IMR-90 (cell line): ENCODE measurements at regions of chr6 and their contacts with region 1.

Region 1: GRCh38 chr6:70107852-70108629 is 194.8 kb downstream of the COL9A1 start:
- DNase-seq: peak; percentile 35
- ATAC-seq: peak; percentile 72
- H3K4me3 ChIP-seq: no peak overlapping the region
- H3K27ac ChIP-seq: no peak overlapping the region
- H3K4me1 ChIP-seq: no peaks in the 10 kb centered on the region
- H3K27me3 ChIP-seq: no peaks in the 10 kb centered on the region
- CTCF ChIP-seq: peak; percentile 75
- POLR2A ChIP-seq: no peak
- RAD21 ChIP-seq: peak; percentile 74

Region 2: GRCh38 chr6:68634726-68635411 is 1473.2 kb before region 1 on chr6 and contains the start of gene ADGRB3:
- CTCF ChIA-PET with region 1: no interaction called
- POLR2A ChIA-PET with region 1: no interaction called
- dilution Hi-C with region 1: no loop called
- in situ Hi-C with region 1: no loop called
- intact Hi-C with region 1: loop called (anchors 1 kb)
- DNase-seq: peak; percentile 47
- ATAC-seq: peak; percentile 88
- H3K4me3 ChIP-seq: peak within 1 kb of the TSS; percentile 72
- H3K27ac ChIP-seq: no peak within 1 kb of the TSS
- H3K4me1 ChIP-seq: no peaks in the 10 kb centered on the region
- H3K27me3 ChIP-seq: peaks cover 5% of the 10 kb centered on the region
- CTCF ChIP-seq: no peak
- POLR2A ChIP-seq: no peak
- RAD21 ChIP-seq: no peak
- total RNA-seq, gene ADGRB3: not detected in 2 replicates

Region 3: DNA sequence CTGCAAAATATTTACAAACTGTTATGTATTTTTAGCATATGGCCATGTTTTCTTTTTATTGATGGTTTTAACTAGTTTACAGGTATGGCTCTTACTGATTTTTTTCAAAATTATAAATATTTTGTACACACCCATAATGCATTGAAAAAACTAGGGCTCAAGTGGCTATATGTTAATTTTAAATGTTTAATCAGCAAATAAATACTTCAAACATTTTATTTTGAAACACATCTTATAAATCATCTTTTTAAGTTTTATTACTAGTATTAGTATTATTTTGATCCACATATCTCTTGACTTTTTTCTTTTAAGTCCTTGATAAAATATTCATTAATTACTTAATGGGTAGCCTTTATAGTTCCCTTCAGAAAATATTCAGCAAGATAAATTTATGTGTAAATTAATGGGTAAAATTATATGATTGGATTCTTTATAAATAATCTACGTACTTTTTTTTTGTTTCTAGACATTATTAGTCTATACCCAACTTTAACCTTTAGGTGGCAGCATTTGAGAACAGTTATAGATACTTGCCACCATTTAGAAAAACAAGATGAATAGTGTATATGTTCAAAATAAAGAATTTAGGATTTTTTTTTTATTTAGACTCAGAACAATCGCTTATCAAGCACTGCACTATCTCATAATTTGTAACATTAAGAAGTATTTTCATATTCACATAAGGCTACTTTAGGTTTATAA is 1231.1 kb before region 1 on chr6:
- CTCF ChIA-PET with region 1: no interaction called
- POLR2A ChIA-PET with region 1: no interaction called
- dilution Hi-C with region 1: no loop called
- in situ Hi-C with region 1: no loop called
- intact Hi-C with region 1: loop called (anchors 1 kb)
- DNase-seq: peak; percentile 4
- ATAC-seq: no peak
- H3K4me3 ChIP-seq: no peak overlapping the region
- H3K27ac ChIP-seq: no peak overlapping the region
- H3K4me1 ChIP-seq: no peaks in the 10 kb centered on the region
- H3K27me3 ChIP-seq: no peaks in the 10 kb centered on the region
- CTCF ChIP-seq: peak; percentile 47
- POLR2A ChIP-seq: no peak
- RAD21 ChIP-seq: peak; percentile 35

Region 4: GRCh38 chr6:68958327-68958726 is 1149.7 kb before region 1 on chr6:
- CTCF ChIA-PET with region 1: no interaction called
- POLR2A ChIA-PET with region 1: no interaction called
- dilution Hi-C with region 1: no loop called
- in situ Hi-C with region 1: no loop called
- intact Hi-C with region 1: loop called (anchors 10 kb)
- DNase-seq: no peak
- ATAC-seq: no peak
- H3K4me3 ChIP-seq: no peak overlapping the region
- H3K27ac ChIP-seq: no peak overlapping the region
- H3K4me1 ChIP-seq: no peaks in the 10 kb centered on the region
- H3K27me3 ChIP-seq: no peaks in the 10 kb centered on the region
- CTCF ChIP-seq: no peak
- POLR2A ChIP-seq: no peak
- RAD21 ChIP-seq: no peak

Region 5: DNA sequence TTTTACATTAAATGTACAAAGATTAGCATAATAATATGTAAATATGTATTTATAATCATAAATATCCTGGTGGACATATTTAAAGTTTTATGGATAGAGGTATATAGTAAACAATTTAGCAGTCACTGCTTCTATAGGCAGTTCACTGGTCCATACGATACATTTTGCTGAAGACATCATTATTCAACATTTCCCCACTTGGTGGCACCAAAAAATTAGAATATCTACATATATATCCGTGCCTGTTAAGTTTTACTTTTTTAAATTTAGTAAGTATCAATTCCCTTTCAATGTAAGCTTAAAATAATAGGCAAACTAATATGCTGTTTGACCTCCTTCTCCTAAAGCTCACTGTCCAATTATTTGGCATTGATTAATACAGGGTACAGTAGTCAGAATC is 375.4 kb before region 1 on chr6:
- CTCF ChIA-PET with region 1: interaction called, 3 read pairs
- POLR2A ChIA-PET with region 1: no interaction called
- dilution Hi-C with region 1: no loop called
- in situ Hi-C with region 1: no loop called
- intact Hi-C with region 1: loop called (anchors 1 kb)
- DNase-seq: no peak
- ATAC-seq: peak; percentile 74; the same call in 1 of the 2 replicates
- H3K4me3 ChIP-seq: no peak overlapping the region
- H3K27ac ChIP-seq: no peak overlapping the region
- H3K4me1 ChIP-seq: no peaks in the 10 kb centered on the region
- H3K27me3 ChIP-seq: no peaks in the 10 kb centered on the region
- CTCF ChIP-seq: 0 out of 2 replicates have a peak, but pooled peaks have one; percentile 23
- POLR2A ChIP-seq: no peak
- RAD21 ChIP-seq: 0 out of 2 replicates have a peak, but pooled peaks have one; percentile 5

Region 6: GRCh38 chr6:69835414-69836179 is 272.4 kb before region 1 on chr6:
- CTCF ChIA-PET with region 1: interaction called, 4 read pairs
- POLR2A ChIA-PET with region 1: no interaction called
- dilution Hi-C with region 1: no loop called
- in situ Hi-C with region 1: loop called (anchors 25 kb)
- intact Hi-C with region 1: loop called (anchors 1 kb)
- DNase-seq: peak; percentile 76
- ATAC-seq: peak; percentile 91
- H3K4me3 ChIP-seq: no peak overlapping the region
- H3K27ac ChIP-seq: no peak overlapping the region
- H3K4me1 ChIP-seq: no peaks in the 10 kb centered on the region
- H3K27me3 ChIP-seq: no peaks in the 10 kb centered on the region; the same call in 1 of the 2 replicates
- CTCF ChIP-seq: peak; percentile 71
- POLR2A ChIP-seq: no peak
- RAD21 ChIP-seq: peak; percentile 49

Region 7: GRCh38 chr6:69866770-69867638 is 241.0 kb before region 1 on chr6:
- CTCF ChIA-PET with region 1: no interaction called
- POLR2A ChIA-PET with region 1: no interaction called
- dilution Hi-C with region 1: no loop called
- in situ Hi-C with region 1: no loop called
- intact Hi-C with region 1: no loop called
- DNase-seq: peak; percentile 0
- ATAC-seq: peak; percentile 87
- H3K4me3 ChIP-seq: peak overlapping the region; percentile 55
- H3K27ac ChIP-seq: no peak overlapping the region
- H3K4me1 ChIP-seq: peaks cover 5% of the 10 kb centered on the region; the same call in 1 of the 2 replicates
- H3K27me3 ChIP-seq: peaks cover 31% of the 10 kb centered on the region
- CTCF ChIP-seq: no peak
- POLR2A ChIP-seq: no peak
- RAD21 ChIP-seq: no peak

Region 8: DNA sequence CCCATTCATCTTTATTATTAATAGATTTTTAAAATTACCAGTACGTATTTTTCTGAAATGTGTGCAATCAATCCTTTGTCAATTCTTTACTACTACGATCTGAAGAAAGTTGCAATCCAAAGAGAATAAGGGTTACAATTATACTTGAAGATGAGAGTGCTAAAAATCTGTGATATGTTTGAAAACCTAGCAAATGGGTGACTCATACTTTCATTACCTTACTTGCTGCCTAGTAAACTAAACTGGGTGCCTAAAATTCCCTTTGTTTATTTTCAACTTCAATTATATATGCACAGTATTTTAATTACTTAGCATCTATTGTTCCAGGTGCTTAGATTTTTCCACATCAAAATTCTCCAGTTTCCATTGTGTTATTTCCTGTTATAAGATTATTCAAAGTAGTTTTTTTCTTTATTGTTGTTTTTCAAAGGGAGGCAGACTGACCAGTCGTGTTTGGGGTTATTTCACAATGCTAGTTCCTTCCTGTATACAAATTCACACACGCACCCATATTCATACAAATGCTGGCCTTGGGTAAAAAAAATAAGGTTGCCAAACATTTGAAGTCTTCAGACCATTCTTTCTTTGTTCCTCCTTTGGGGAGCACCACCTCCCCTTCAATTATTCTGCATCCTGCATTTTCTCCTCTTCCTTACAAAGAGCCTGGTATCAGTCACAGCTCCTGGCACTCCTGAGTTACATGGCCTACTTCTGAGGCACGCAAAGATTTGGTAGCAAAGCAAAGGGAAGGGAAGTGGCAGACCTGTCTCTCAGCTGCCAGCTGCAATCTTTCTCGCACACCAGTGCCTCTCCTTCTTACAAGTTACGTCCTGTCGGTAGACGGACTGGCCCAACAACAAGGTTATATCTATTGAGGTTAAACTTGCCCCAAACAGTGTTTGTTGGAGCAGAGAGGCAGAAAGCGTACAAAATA is 289.0 kb after region 1 on chr6:
- CTCF ChIA-PET with region 1: no interaction called
- POLR2A ChIA-PET with region 1: no interaction called
- dilution Hi-C with region 1: no loop called
- in situ Hi-C with region 1: no loop called
- intact Hi-C with region 1: no loop called
- DNase-seq: no peak
- ATAC-seq: no peak
- H3K4me3 ChIP-seq: no peak overlapping the region
- H3K27ac ChIP-seq: no peak overlapping the region
- H3K4me1 ChIP-seq: peaks cover 3% of the 10 kb centered on the region; the same call in 1 of the 2 replicates
- H3K27me3 ChIP-seq: peaks cover 3% of the 10 kb centered on the region; the same call in 1 of the 2 replicates
- CTCF ChIP-seq: no peak
- POLR2A ChIP-seq: no peak
- RAD21 ChIP-seq: no peak